Activated naive CD4-positive, alpha-beta T cell treated with anti-CD3 and anti-CD28 coated beads, Interleukin-2, amount 10 ng/mL, durations not matched to agents 7 days and 5 days (primary cell): ENCODE measurements at regions of chr12 and their contacts with region 1.

Region 1: GRCh38 chr12:26119391-26119981 is 5.4 kb downstream of the BHLHE41 start:
- DNase-seq: no peak
- H3K4me3 Mint-ChIP-seq: no peak overlapping the region
- H3K27ac Mint-ChIP-seq: no peak overlapping the region
- H3K4me1 Mint-ChIP-seq: peaks cover 23% of the 10 kb centered on the region
- H3K27me3 Mint-ChIP-seq: peaks cover 80% of the 10 kb centered on the region

Region 2: GRCh38 chr12:26143291-26143690 is 23.8 kb after region 1 on chr12:
- CTCF ChIA-PET with region 1: no interaction called
- DNase-seq: no peak
- H3K4me3 Mint-ChIP-seq: no peak overlapping the region
- H3K27ac Mint-ChIP-seq: no peak overlapping the region
- H3K4me1 Mint-ChIP-seq: no peaks in the 10 kb centered on the region
- H3K27me3 Mint-ChIP-seq: no peaks in the 10 kb centered on the region

Region 3: GRCh38 chr12:26188127-26188526 is 68.6 kb after region 1 on chr12:
- CTCF ChIA-PET with region 1: no interaction called
- DNase-seq: no peak
- H3K4me3 Mint-ChIP-seq: no peak overlapping the region
- H3K27ac Mint-ChIP-seq: no peak overlapping the region
- H3K4me1 Mint-ChIP-seq: no peaks in the 10 kb centered on the region
- H3K27me3 Mint-ChIP-seq: peaks cover 37% of the 10 kb centered on the region

Region 4: GRCh38 chr12:26614020-26614616 is 494.6 kb after region 1 on chr12:
- CTCF ChIA-PET with region 1: interaction called, 18 read pairs
- DNase-seq: peak; percentile 29
- H3K4me3 Mint-ChIP-seq: no peak overlapping the region
- H3K27ac Mint-ChIP-seq: no peak overlapping the region
- H3K4me1 Mint-ChIP-seq: no peaks in the 10 kb centered on the region
- H3K27me3 Mint-ChIP-seq: no peaks in the 10 kb centered on the region

Region 5: DNA sequence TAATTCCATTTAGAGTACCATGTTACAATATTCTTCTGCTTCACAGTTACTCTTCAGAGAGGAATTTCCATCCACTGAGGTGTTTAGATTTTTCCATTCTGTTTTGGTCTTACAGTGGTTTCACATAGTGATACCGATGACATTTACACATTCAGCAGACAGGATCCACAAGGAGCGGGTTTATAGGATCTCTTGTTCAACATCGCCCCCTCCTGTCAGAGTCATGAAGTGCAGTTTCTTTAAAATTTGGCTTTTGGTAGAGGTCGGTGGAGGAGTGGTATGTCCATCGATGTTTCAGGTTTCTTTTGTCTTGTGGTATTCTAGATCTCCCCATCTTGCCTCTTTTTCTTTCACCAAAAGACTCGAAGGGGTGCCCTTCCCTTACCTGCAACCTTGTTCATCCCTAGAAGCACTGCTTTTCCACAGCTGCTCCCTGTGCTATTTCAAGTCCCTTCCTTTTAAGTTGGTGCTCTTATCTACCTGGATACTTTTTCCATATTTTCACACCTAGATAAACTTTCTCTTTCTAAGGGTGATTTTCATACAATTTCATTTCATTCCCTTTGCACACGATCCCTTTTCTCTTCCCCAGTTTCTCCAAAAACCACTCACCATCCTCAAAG is 532.2 kb after region 1 on chr12:
- CTCF ChIA-PET with region 1: interaction called, 12 read pairs
- DNase-seq: peak; percentile 62
- H3K4me3 Mint-ChIP-seq: no peak overlapping the region
- H3K27ac Mint-ChIP-seq: no peak overlapping the region
- H3K4me1 Mint-ChIP-seq: no peaks in the 10 kb centered on the region
- H3K27me3 Mint-ChIP-seq: no peaks in the 10 kb centered on the region